CD8-positive, alpha-beta T cell (primary cell): ENCODE measurements at regions of chr12 and their contacts with region 1.

Region 1: DNA sequence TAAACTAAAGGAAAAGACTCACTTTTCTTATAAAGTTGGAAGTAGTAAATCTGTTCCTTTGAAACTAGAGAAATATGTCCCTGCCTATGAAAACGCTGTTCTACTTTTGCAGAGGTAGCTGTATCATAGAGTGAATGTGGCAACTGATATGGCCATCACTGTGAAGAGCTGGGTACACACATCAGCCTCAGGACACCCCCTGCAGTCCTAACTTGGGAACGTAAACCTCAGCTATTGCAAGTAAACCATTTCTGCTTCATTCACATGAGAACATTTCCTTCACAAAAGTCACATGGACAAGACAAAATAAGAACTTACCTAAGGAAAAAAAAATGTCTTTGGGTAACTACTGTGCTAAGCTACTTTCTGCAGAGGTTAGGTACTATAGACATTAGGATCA is 233.3 kb upstream of the PPFIA2 start:
- DNase-seq: peak in 7 of 9 experiments; percentile 5 to 65 (median 37)
- ATAC-seq: peak; percentile 63
- H3K4me3 ChIP-seq: no peak overlapping the region
- H3K4me3 Mint-ChIP-seq: no peak overlapping the region
- H3K27ac ChIP-seq: no peak overlapping the region
- H3K27ac Mint-ChIP-seq: no peak overlapping the region
- H3K4me1 ChIP-seq: no peaks in the 10 kb centered on the region
- H3K4me1 Mint-ChIP-seq: peaks cover 4% of the 10 kb centered on the region
- H3K27me3 ChIP-seq: no peaks in the 10 kb centered on the region
- H3K27me3 Mint-ChIP-seq: no peaks in the 10 kb centered on the region
- CTCF ChIP-seq: no peak

Region 2: GRCh38 chr12:81797100-81797499 is 195.4 kb before region 1 on chr12:
- CTCF ChIA-PET with region 1: interaction called, 3 read pairs
- POLR2A ChIA-PET with region 1: no interaction called
- intact Hi-C with region 1: loop called in 1 of 2 experiments (anchors 5 kb)
- DNase-seq: peak in 2 of 9 experiments; percentile 9 to 13
- ATAC-seq: no peak
- H3K4me3 ChIP-seq: no peak overlapping the region
- H3K4me3 Mint-ChIP-seq: no peak overlapping the region
- H3K27ac ChIP-seq: no peak overlapping the region
- H3K27ac Mint-ChIP-seq: no peak overlapping the region
- H3K4me1 ChIP-seq: no peaks in the 10 kb centered on the region
- H3K4me1 Mint-ChIP-seq: no peaks in the 10 kb centered on the region
- H3K27me3 ChIP-seq: no peaks in the 10 kb centered on the region
- H3K27me3 Mint-ChIP-seq: peaks cover 4% of the 10 kb centered on the region
- CTCF ChIP-seq: no peak

Region 3: GRCh38 chr12:81866081-81866480 is 126.4 kb before region 1 on chr12:
- CTCF ChIA-PET with region 1: no interaction called
- POLR2A ChIA-PET with region 1: no interaction called
- intact Hi-C with region 1: no loop called
- DNase-seq: peak in 1 of 9 experiments; percentile 0
- ATAC-seq: no peak
- H3K4me3 ChIP-seq: no peak overlapping the region
- H3K4me3 Mint-ChIP-seq: no peak overlapping the region
- H3K27ac ChIP-seq: no peak overlapping the region
- H3K27ac Mint-ChIP-seq: no peak overlapping the region
- H3K4me1 ChIP-seq: no peaks in the 10 kb centered on the region
- H3K4me1 Mint-ChIP-seq: no peaks in the 10 kb centered on the region
- H3K27me3 ChIP-seq: no peaks in the 10 kb centered on the region
- H3K27me3 Mint-ChIP-seq: no peaks in the 10 kb centered on the region
- CTCF ChIP-seq: no peak

Region 4: DNA sequence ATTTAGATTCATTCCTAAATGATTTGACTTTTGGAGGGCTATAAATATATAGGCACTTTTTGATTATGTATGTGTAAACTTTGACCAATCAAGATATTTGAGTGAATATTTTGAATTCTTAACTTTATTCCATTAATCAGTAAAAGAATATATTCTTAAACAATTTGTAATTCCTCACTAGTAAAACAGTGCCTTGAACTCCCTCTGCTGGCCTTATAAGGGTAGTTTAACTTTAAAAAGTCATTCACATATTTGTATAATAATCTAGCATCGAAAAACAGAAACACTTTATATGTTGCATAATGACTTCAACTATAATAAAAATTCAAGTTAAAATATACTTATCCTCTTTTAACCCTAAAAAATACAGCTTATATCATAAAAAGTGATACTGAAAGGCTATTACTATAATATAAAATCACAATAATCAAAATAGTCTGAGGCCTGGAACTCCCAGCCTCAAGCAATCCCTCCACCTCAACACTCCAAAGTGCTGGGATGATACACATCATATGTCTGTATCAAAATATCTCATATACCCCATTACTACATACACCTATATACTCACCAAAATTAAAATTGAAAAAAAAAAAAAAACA is 334.5 kb after region 1 on chr12:
- CTCF ChIA-PET with region 1: no interaction called
- POLR2A ChIA-PET with region 1: no interaction called
- intact Hi-C with region 1: loop called in 1 of 2 experiments (anchors 10 kb)
- DNase-seq: peak in 2 of 9 experiments; percentile 21 to 24
- ATAC-seq: no peak
- H3K4me3 ChIP-seq: no peak overlapping the region
- H3K4me3 Mint-ChIP-seq: no peak overlapping the region
- H3K27ac ChIP-seq: no peak overlapping the region
- H3K27ac Mint-ChIP-seq: no peak overlapping the region
- H3K4me1 ChIP-seq: no peaks in the 10 kb centered on the region
- H3K4me1 Mint-ChIP-seq: no peaks in the 10 kb centered on the region
- H3K27me3 ChIP-seq: no peaks in the 10 kb centered on the region
- H3K27me3 Mint-ChIP-seq: peaks cover 8% of the 10 kb centered on the region
- CTCF ChIP-seq: peak; percentile 56

Region 5: DNA sequence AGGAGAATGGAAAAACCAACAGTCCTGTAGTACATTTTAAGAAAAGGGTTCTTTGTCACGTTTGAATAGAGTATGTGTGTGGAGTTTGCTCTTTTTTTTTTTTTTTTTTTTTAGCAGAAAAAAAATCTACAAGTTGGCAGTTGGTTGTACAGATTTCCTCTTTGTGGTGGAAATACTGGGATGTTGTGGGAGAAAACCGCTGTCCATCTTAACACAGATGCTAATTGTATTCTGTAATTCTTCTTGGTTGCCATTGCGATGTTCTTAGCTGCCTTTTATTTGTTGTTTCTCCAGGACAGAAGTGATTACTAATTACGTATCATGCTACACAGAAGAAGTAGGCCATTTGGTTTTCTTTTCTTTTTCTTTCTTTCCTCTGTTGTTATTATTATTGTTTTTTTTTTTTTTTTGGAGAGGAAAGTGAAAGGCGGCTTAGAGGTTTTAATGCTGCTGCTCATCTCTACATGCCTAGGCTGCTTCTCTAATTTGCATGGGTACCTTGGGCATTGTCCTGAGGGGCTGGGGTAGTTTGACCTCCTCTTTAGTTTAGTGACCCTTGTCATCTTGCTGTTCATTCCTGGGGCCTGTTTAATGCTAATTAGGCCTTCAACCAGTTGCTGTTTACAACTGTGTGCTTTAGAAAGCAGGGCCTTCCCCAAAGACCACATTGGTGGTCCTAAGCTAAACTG is 789.0 kb after region 1 on chr12:
- CTCF ChIA-PET with region 1: no interaction called
- POLR2A ChIA-PET with region 1: no interaction called
- intact Hi-C with region 1: no loop called
- DNase-seq: no peak
- ATAC-seq: no peak
- H3K4me3 ChIP-seq: no peak overlapping the region
- H3K4me3 Mint-ChIP-seq: no peak overlapping the region
- H3K27ac ChIP-seq: no peak overlapping the region
- H3K27ac Mint-ChIP-seq: no peak overlapping the region
- H3K4me1 ChIP-seq: no peaks in the 10 kb centered on the region
- H3K4me1 Mint-ChIP-seq: no peaks in the 10 kb centered on the region
- H3K27me3 ChIP-seq: no peaks in the 10 kb centered on the region
- H3K27me3 Mint-ChIP-seq: no peaks in the 10 kb centered on the region
- CTCF ChIP-seq: no peak